A673 (cell line): ENCODE measurements at regions of chr1 and their contacts with region 1.

Region 1: DNA sequence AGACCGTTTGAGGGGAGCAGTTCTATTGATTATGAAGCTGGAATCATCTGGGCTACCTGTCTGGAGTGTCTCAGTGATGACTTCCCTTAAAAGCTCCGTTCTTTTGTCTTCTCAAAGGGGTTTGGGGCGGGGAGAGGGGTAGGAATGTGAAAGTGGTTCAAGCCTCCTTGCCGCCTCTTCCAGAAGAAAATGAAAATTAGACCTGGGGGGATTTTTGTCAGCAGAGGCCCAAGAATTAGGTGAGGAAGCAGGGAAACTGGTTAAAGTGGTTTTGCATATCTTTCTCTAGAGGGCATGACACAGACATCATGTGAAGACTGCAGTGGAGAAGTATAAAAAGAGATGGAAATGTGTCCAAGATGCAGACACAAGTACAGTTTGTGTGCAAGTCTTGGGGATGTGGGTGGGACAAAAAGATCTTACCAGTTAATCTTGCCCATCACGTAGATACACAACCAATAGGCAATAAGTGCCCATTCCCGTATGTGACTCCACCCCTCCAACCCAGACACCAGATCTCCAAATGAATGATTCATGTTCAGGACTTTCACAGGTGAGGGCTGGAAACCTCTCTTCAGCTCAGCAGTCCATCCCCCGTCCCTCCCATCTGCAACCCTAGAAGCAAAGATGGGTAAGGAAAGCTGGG is 504 bp upstream of the MTMR11 start:
- DNase-seq: peak; percentile 45
- H3K4me3 ChIP-seq: peak overlapping the region; percentile 50
- H3K27ac ChIP-seq: peak overlapping the region; percentile 39
- H3K4me1 ChIP-seq: peaks cover 25% of the 10 kb centered on the region
- H3K27me3 ChIP-seq: no peaks in the 10 kb centered on the region
- CTCF ChIP-seq: no peak

Region 2: DNA sequence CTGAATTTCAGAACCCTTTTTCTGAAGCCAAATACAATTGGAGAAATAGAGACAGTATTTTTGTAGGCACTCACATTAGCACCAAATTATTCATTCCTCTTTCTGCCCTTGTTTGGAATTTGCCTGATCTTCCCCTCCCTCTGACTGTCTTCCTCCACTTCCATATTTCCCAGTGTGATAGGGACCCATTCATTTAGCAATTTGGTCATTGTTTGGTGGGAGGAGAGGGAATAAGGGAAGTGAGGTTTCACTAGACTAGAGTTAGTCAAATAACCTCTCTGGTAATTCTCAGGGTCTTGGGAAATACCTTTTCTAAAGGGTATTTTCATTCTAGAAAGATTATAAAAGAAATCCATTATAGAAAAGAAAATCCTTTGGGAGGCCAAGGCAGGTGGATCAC is 30.5 kb after region 1 on chr1:
- CTCF ChIA-PET with region 1: interaction called, 3 read pairs
- POLR2A ChIA-PET with region 1: interaction called, 13 read pairs
- intact Hi-C with region 1: no loop called
- DNase-seq: no peak
- H3K4me3 ChIP-seq: no peak overlapping the region
- H3K27ac ChIP-seq: no peak overlapping the region
- H3K4me1 ChIP-seq: no peaks in the 10 kb centered on the region
- H3K27me3 ChIP-seq: no peaks in the 10 kb centered on the region
- CTCF ChIP-seq: no peak

Region 3: GRCh38 chr1:151238467-151238739 is 1301.2 kb after region 1 on chr1:
- CTCF ChIA-PET with region 1: no interaction called
- POLR2A ChIA-PET with region 1: no interaction called
- intact Hi-C with region 1: no loop called
- DNase-seq: no peak
- H3K4me3 ChIP-seq: no peak overlapping the region
- H3K27ac ChIP-seq: no peak overlapping the region
- H3K4me1 ChIP-seq: no peaks in the 10 kb centered on the region
- H3K27me3 ChIP-seq: no peaks in the 10 kb centered on the region
- CTCF ChIP-seq: no peak